GM13976 (cell line): ENCODE measurements at regions of chr4 and their contacts with region 1.

Region 1: DNA sequence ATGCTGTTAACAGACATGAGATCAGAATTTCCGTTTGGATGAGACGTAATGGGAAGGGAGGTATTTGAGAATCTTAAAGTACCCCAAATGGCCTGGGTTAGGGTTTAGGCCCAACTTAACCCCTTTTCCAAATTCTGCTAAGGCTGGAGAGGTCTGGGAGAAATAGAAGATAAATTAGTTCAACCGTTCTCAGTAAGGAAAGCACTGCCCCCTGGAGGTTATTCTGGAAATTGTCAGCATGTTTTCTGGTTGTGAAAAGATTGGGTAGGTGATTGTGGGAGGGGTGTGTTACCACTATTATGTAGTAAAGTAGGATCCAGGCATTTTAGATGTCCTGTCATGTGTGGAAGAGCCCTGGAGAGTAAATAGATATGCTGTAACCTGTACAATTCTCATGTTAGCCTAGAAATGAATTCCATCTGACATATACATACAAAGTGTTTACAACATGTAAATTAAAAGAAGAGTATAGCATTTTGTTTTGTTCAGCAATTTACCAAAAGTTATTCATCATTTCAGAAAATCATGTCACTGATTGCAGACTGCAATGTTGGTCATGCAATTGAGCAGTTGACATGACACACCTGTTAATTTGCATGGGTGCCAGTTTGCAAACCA is 26.8 kb upstream of the GRXCR1 start:
- DNase-seq: peak; percentile 30
- CTCF ChIP-seq: peak; percentile 63

Region 2: DNA sequence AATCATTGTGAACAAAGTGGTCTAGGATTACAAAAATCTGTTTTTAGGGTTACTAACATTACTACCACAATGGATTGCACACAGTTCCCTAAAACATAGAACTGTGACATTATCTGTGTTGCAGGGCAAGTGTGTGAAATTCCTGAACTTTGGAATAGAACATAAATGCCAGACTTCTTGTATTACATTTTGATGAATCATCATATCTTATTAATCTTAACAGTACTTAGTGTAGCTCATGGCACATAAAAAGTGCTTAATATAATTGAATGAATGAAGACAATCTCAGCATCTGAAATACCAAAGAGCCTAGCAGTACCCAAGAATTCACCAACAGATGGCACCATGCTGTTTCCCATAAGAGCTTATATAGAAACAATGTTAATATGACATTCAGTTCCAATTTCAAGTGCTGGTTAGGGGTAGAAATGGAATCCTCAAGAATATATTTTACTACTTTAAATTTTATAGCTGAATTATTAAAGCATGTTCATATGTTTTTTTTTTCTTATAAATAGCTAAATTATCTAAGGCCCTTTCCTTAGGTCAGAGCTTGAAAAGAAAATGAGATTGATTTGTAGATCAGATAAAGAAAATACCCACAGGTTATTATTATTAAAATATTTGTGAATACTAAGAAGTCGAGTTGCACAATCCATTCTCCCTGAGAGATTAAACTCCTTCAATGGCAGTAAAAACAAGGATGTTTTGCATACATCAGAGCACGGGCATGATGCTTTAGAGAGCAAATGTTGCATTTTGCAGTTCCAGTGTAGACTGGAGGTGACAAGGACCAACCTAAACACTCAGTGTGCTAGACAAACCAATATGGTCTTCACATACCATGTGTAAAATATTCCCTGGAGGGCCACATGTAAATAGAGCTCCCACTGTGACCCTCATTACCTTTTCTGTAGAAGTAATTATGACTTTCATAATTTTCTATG is 494.1 kb before region 1 on chr4:
- in situ Hi-C with region 1: loop called (anchors 25 kb)
- DNase-seq: peak; percentile 62
- CTCF ChIP-seq: peak; percentile 47

Region 3: DNA sequence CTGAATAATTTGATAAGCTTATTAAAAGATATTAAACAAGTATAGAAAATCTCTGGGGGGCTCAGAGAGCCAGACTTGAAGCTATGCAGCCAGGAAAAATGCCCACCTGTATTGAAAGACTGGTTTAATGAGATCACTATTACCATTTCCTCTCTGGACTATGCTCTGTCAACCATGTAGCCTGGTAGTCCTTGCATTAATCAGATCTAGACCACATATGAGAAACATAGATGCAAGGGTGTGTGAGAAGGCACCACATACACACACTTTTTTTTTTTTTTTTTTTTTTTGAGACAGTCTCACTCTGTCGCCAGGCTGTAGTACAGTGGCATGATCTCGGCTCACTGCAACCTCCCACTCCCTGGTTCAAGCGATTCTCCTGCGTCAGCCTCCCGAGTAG is 132.9 kb before region 1 on chr4:
- in situ Hi-C with region 1: no loop called
- DNase-seq: no peak
- CTCF ChIP-seq: no peak

Region 4: DNA sequence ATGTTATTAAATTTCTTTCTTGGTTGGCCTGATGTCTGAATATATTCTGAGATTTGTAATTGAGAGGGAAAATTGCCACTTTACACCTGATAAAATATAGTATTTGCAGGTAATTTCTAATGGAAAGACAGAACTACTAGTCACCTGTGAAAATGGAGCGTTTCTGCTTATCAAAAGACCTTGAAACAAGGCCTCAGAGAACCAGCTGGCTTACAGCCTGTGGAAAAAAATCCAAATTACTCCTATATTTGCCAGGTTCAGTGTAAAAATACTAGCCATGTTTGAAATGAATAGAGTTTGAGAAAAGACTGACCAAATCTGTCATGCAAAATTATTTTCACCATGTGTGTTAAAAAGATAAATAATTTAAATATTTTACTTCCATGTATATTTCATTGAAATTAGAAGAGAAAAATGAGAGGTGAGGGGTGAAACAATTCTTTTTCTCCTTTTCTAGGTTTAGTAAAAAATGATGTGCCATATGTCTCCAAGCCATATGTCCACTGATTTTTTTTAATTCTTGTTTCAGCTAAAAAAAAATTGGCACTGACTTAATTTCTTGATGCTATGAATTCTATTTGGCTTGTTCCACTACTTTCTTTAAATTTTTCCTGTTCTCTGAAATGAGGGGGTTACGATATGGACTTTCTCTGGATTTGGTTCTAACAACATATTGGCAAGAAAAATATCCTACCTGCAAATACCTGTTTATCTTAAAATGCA is 491.7 kb after region 1 on chr4:
- in situ Hi-C with region 1: no loop called
- DNase-seq: no peak
- CTCF ChIP-seq: no peak